Heart left ventricle (tissue), 16 donors: ENCODE measurements at regions of chr21 and their contacts with region 1.

Region 1: DNA sequence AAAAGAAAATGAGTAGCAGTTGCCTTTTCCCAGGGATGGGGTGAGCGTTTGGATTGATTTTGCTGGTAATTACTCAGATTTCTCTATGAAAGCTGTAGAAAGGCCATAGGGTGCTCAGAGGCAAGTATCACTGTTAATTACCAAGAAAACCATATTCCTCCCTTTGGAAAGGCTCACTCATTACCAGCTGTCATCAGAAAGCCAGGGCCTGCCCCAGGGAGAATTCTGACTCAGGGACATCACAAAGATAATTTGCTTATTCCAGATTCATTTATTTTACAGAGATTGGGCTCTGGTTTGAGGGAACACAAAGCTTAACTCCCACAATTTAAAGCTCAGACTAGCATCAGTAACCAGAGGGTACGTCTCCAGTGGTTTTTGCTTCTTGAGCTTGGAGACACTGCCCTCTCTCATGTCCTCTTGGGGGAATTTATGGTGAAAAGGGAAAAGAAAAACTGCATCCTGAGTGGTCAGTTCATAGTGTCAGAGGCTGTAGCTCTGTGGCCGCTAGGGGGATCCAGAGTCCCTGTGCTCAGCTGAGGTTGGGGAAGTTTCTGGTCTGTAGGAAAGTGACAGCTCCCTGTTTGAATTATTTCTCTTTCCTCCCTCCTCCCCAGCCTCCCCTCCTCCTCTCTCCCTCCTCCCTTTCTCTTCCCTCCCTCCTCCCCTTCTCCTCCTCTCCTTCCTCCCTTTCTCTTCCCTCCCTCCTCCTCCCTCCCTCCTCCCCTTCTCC is 204.3 kb downstream of the KCNJ6 start:
- DNase-seq: peak; percentile 57 to 76 (median 68)
- ATAC-seq: peak; percentile 82 to 85 (median 84)
- H3K4me3 ChIP-seq: no peak overlapping the region
- H3K27ac ChIP-seq: peak overlapping the region in 5 of 12 donors; percentile 23 to 66 (median 45)
- H3K4me1 ChIP-seq: peaks cover 0 to 19% (median 6%) of the 10 kb centered on the region in 12 donors
- H3K27me3 ChIP-seq: no peaks in the 10 kb centered on the region
- CTCF ChIP-seq: peak; percentile 62 to 87 (median 78)
- POLR2A ChIP-seq: no peak

Region 2: DNA sequence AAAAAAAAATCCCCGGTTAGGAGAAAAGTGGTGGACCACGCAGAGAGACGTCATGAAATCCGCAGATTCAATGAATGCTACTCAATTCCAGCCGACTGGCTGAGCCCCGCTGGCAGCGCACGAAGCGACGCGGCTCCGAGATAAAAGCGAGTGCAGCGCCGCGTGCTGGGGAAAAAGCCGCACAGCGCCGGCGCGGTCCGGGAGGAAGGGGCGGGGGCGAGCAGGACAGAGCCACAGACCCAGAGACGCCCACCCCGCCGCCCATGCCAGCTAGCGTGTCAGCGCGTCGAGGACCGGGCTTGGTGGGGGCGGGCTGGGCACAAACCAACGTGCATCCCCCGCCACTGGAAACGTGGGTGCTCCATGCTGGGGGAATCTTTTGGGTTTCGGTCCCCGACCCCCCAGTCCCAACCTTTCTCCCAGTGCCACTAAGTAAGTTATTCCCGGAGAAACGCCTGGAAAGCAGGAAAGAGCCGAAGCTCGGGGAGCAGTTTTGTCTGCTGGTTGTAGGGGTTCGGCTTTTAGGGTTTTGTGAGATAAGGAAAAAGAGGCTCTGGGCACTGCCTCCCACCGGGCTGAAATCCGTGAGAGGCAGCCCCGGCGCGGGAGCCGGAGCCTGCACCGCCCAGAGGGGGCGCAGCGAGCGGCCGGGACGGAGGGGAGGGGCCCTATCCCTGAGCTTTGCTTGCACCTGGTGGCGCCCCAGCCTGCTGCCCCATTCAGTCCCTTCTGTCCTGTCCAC is 204.5 kb after region 1 on chr21 and contains the start of gene KCNJ6:
- intact Hi-C with region 1: loop called (anchors 2 to 10 kb)
- DNase-seq: peak in 4 of 5 donors; percentile 21 to 66 (median 38)
- ATAC-seq: peak; percentile 42 to 83 (median 53)
- H3K4me3 ChIP-seq: peak within 1 kb of the TSS in 10 of 12 donors; percentile 8 to 42 (median 27)
- H3K27ac ChIP-seq: no peak within 1 kb of the TSS
- H3K4me1 ChIP-seq: peaks cover 0 to 21% (median 13%) of the 10 kb centered on the region in 12 donors
- H3K27me3 ChIP-seq: peaks cover 16 to 84% (median 28%) of the 10 kb centered on the region in 9 donors
- CTCF ChIP-seq: peak; percentile 11 to 58 (median 45)
- POLR2A ChIP-seq: no peak
- total RNA-seq, gene KCNJ6: not detected

Region 3: GRCh38 chr21:38126669-38127303 is 414.8 kb after region 1 on chr21:
- intact Hi-C with region 1: loop called (anchors 1 to 10 kb)
- DNase-seq: peak; percentile 23 to 56 (median 39)
- ATAC-seq: peak in 3 of 4 donors; percentile 57 to 72 (median 68)
- H3K4me3 ChIP-seq: no peak overlapping the region
- H3K27ac ChIP-seq: no peak overlapping the region
- H3K4me1 ChIP-seq: no peaks in the 10 kb centered on the region
- H3K27me3 ChIP-seq: peaks cover 0 to 12% (median 0%) of the 10 kb centered on the region in 9 donors
- CTCF ChIP-seq: peak; percentile 41 to 75 (median 64)
- POLR2A ChIP-seq: no peak

Region 4: DNA sequence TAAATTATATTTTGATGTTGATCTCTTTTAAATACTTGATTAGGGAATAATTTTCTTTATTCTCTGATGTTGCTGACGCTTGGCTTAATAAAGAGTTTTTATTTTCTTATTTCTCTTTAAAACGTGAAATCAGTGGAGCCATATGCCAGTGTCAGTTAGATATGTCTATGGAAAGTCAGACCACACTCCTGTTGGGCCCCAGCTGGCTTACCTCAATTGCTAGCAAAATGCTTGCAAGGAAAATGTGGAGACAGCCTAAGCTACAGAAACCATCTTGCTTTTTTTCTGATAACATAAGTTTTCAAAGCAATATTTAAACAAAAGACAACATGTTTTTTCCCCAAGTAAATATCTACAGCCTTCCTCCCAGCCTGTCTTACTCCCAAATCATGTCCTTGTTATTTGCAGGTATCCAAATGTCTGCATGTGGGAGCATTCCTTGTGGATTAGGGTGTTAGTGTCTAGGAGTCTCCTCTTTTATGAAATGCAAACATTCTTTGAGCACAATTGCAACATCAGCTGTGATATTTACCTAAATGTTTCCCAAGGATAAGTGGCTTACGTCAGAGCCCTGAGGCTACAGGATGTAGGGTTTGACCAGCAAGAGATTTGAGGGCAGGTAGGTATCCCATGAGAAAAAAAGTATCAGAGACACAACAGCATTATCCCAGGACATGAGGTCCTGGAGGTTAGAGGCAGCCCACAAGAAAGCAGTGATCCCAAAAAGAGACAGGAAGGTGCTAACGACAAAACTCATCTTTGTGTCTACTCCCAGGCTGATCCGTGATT is 427.6 kb after region 1 on chr21:
- intact Hi-C with region 1: loop called in 1 of 10 experiments (anchors 10 kb)
- DNase-seq: no peak
- ATAC-seq: no peak
- H3K4me3 ChIP-seq: no peak overlapping the region
- H3K27ac ChIP-seq: no peak overlapping the region
- H3K4me1 ChIP-seq: peaks cover 0 to 9% (median 0%) of the 10 kb centered on the region in 12 donors
- H3K27me3 ChIP-seq: peaks cover 0 to 2% (median 0%) of the 10 kb centered on the region in 9 donors
- CTCF ChIP-seq: no peak
- POLR2A ChIP-seq: no peak